ENCODE measurements at regions of chr2 and their contacts with region 1.

Region 1: GRCh38 chr2:113390124-113390849 is 47.2 kb upstream of the ZNG1B start:
- H3K4me3 ChIP-seq: no peak overlapping the region
- H3K27ac ChIP-seq: no peak overlapping the region
- H3K4me1 ChIP-seq: no peaks in the 10 kb centered on the region
- CTCF ChIP-seq: peak; percentile 75

Region 2: DNA sequence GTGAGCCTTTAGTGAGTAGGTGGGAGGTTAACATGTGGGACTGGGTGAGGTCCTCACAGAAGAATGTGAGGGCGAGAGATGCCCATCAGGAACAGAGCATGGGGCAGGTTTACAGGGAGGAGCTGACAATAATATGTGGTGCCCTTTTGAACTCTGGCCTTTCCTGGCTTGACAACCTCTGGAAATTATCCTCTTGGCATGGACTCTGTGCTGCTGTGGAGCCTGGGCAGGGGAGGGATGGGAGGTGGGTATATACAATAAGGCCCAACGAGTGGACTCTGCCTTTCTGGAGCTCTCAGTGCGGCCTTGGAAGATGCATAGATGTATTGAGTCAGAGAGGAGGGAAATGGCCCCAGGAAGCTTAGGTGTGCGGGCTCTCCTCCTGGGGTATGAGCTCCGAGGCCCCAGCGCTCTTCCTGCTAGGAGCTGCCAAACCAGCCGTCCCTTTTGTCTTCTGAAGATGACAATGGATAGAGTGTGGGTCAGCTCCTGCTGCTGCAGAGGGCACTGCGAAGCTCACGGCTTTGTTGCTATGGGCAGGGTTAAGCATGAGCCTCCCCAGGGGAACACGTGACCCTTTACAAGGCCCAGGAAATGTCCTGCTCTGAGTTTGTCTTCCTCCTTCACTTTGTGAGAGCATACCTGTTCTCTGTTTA is 225.2 kb before region 1 on chr2:
- CTCF ChIA-PET with region 1: no interaction called
- POLR2A ChIA-PET with region 1: no interaction called
- H3K4me3 ChIP-seq: no peak overlapping the region
- H3K27ac ChIP-seq: no peak overlapping the region
- H3K4me1 ChIP-seq: no peaks in the 10 kb centered on the region
- CTCF ChIP-seq: no peak

Region 3: GRCh38 chr2:113211226-113212105 is 178.8 kb before region 1 on chr2:
- CTCF ChIA-PET with region 1: interaction called, 50 read pairs
- POLR2A ChIA-PET with region 1: no interaction called
- H3K4me3 ChIP-seq: no peak overlapping the region
- H3K27ac ChIP-seq: no peak overlapping the region
- H3K4me1 ChIP-seq: peaks cover 13% of the 10 kb centered on the region
- CTCF ChIP-seq: no peak

Region 4: DNA sequence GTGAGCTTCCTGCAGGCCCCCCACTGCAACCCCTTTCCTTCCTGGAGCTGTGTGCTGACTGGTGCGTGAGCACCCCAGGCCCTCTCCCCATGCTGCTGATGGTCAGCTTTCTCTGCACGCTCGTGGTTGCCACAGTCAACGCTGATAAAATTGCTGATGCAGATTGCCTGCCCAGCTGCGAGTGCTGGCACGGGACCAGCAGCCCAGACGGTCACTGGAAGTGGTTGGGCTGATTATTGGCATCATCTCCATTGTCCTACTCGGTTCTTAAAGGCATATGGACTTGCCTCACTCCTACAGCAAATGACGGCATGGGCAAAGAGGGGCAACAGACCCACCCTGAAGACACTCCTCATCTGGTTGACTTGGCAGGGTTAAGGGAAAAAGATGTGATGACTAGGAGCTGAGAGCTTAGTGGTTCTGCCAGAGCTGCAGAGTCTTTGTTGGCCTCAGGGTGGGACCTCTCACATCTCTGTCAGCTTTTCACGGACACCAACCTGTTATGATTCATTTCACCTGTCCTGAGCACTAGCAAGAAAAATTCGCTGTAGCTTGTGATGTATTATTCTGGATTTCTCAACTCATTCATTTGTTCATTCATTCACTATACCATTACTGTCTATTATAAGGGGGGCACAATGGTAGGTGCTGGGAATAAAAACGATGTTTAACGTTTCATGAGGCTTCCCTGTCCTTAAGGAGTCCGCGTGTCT is 150.0 kb before region 1 on chr2:
- CTCF ChIA-PET with region 1: interaction called, 14 read pairs
- POLR2A ChIA-PET with region 1: no interaction called
- H3K4me3 ChIP-seq: no peak overlapping the region
- H3K27ac ChIP-seq: no peak overlapping the region
- H3K4me1 ChIP-seq: peaks cover 11% of the 10 kb centered on the region
- CTCF ChIP-seq: no peak

Region 5: GRCh38 chr2:113257516-113258264 is 132.6 kb before region 1 on chr2:
- CTCF ChIA-PET with region 1: interaction called, 13 read pairs
- POLR2A ChIA-PET with region 1: no interaction called
- H3K4me3 ChIP-seq: no peak overlapping the region
- H3K27ac ChIP-seq: no peak overlapping the region
- H3K4me1 ChIP-seq: no peaks in the 10 kb centered on the region
- CTCF ChIP-seq: no peak

Region 6: GRCh38 chr2:113407446-113408099 is 17.3 kb after region 1 on chr2:
- CTCF ChIA-PET with region 1: interaction called, 12 read pairs
- POLR2A ChIA-PET with region 1: no interaction called
- H3K4me3 ChIP-seq: no peak overlapping the region
- H3K27ac ChIP-seq: no peak overlapping the region
- H3K4me1 ChIP-seq: peaks cover 12% of the 10 kb centered on the region
- CTCF ChIP-seq: no peak

Measured in HEK293 (cell line).